Heart left ventricle (tissue), 16 donors: ENCODE measurements at regions of chr5 and their contacts with region 1.

Region 1: GRCh38 chr5:140710899-140711552 is 10.8 kb downstream of the ZMAT2 start:
- DNase-seq: peak; percentile 77 to 91 (median 85)
- ATAC-seq: peak; percentile 63 to 97 (median 96)
- H3K4me3 ChIP-seq: peak overlapping the region; percentile 28 to 72 (median 63)
- H3K27ac ChIP-seq: peak overlapping the region in 11 of 12 donors; percentile 67 to 95 (median 88)
- H3K4me1 ChIP-seq: peaks cover 0 to 12% (median 0%) of the 10 kb centered on the region in 12 donors
- H3K27me3 ChIP-seq: no peaks in the 10 kb centered on the region
- CTCF ChIP-seq: no peak
- POLR2A ChIP-seq: peak in 1 of 2 donors; percentile 44

Region 2: GRCh38 chr5:140362860-140363630 is 348.0 kb before region 1 on chr5:
- intact Hi-C with region 1: loop called in 2 of 10 experiments (anchors 10 kb)
- DNase-seq: peak; percentile 72 to 91 (median 76)
- ATAC-seq: peak; percentile 23 to 68 (median 64)
- H3K4me3 ChIP-seq: peak overlapping the region in 10 of 12 donors; percentile 16 to 50 (median 40)
- H3K27ac ChIP-seq: no peak overlapping the region
- H3K4me1 ChIP-seq: peaks cover 0 to 11% (median 3%) of the 10 kb centered on the region in 12 donors
- H3K27me3 ChIP-seq: no peaks in the 10 kb centered on the region
- CTCF ChIP-seq: peak; percentile 80 to 98 (median 94)
- POLR2A ChIP-seq: no peak

Region 3: DNA sequence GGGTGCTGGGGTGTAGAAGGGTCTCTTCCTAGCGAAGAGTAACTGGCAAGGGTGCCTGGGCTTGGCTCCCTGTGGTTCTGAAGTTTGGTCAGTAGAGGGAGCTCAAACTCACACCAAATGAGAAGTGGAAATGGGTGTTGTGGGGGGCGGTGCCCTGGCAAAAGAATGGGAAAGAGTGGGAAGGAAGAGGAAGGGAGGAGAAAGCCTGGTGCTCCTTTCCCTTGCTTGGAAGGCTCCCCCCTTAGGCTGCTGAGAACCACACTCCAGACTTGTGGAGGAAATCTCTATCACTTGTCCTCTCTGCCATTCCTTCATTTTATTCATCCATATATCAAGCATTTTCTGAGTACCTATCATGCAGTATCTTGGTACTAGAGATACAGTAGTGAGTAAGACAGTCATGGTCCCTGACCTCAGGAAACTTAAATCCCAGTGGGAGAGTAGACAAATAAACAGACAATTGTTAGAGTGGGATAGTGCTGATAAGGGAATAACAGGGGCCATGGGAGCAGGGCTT is 338.0 kb before region 1 on chr5:
- intact Hi-C with region 1: loop called in 3 of 10 experiments (anchors 5 to 10 kb)
- DNase-seq: peak; percentile 75 to 79 (median 78)
- ATAC-seq: peak; percentile 39 to 90 (median 86)
- H3K4me3 ChIP-seq: no peak overlapping the region
- H3K27ac ChIP-seq: peak overlapping the region in 1 of 12 donors; percentile 3
- H3K4me1 ChIP-seq: peaks cover 0 to 9% (median 8%) of the 10 kb centered on the region in 12 donors
- H3K27me3 ChIP-seq: no peaks in the 10 kb centered on the region
- CTCF ChIP-seq: peak; percentile 69 to 90 (median 79)
- POLR2A ChIP-seq: no peak

Region 4: DNA sequence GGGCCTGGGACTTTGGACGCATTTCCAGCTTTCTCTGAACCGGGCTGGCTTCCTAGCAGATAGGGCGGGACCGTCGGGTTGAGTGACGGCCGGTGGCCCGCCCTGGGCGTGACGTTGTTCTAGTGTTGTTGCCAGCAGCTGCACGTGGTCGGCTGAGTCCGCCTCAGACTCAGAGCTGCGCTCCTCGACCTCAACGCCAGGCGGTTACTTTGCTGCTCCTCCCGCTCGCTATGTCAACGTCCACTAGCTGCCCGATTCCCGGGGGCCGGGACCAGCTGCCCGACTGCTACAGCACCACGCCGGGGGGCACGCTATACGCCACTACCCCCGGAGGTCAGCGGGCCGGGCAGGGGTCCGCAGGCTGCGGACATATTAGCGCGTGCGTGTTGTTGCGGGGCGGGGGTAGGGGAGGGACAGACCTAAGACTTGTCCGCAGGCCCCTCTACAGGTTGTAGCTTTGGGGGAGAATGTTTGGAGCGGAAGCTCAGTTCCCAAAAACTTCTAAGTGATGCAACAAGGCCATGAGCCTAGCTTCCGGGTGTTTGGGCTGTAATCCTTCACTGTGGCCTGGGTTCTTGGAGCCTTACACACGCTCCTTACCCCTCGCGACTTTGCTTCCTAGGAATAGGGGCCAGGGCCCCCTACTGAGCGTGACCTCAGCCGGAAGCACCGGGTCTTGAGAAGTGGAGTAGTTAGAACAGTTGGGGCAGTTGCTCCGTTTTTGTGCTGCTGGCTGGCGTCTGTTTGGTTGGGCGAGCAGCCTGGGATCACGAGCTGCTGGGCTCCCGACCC is 163.3 kb before region 1 on chr5 and contains the start of gene EIF4EBP3:
- intact Hi-C with region 1: loop called in 1 of 10 experiments (anchors 5 kb)
- DNase-seq: peak; percentile 97 to 98 (median 98)
- ATAC-seq: peak; percentile 90 to 96 (median 94)
- H3K4me3 ChIP-seq: peak within 1 kb of the TSS; percentile 25 to 65 (median 54)
- H3K27ac ChIP-seq: peak within 1 kb of the TSS; percentile 83 to 98 (median 94)
- H3K4me1 ChIP-seq: peaks cover 14 to 50% (median 43%) of the 10 kb centered on the region in 12 donors
- H3K27me3 ChIP-seq: no peaks in the 10 kb centered on the region
- CTCF ChIP-seq: peak; percentile 35 to 81 (median 56)
- POLR2A ChIP-seq: peak in 1 of 2 donors; percentile 83
- total RNA-seq, gene EIF4EBP3: 4.7 to 34.9 (median 14.6) TPM

Region 5: DNA sequence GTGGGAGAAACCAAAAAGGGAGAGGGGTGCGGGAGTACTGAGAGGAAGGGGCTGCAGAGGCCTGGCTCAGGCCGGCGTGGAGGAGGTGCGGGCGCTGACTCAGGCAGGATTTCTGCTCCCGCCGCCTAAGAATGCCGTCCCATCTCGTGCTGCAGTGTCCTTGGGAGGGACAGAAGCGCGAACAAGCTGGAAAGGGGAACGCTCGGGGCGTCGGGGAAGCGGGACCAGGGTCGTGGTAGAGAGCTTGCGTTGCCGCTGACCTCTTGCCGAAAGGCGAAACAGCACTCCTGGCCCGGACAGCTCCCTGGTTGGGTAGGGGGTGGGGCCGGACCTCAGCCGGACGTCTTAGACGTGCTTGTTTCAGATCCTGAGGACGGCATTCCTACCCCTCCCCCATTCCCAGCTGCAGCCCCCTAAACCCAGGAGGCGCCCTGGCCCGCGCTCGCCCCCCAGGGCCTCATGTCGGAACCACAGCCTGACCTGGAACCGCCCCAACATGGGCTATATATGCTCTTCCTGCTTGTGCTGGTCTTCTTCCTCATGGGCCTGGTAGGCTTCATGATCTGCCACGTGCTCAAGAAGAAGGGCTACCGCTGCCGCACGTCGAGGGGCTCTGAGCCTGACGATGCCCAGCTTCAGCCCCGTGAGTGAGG is 926.9 kb after region 1 on chr5:
- intact Hi-C with region 1: no loop called
- DNase-seq: peak; percentile 58 to 82 (median 66)
- ATAC-seq: peak in 3 of 4 donors; percentile 23 to 53 (median 42)
- H3K4me3 ChIP-seq: peak overlapping the region; percentile 45 to 97 (median 78)
- H3K27ac ChIP-seq: peak overlapping the region in 1 of 12 donors; percentile 81
- H3K4me1 ChIP-seq: peaks cover 3 to 44% (median 24%) of the 10 kb centered on the region in 12 donors
- H3K27me3 ChIP-seq: no peaks in the 10 kb centered on the region
- CTCF ChIP-seq: peak in 7 of 12 donors; percentile 7 to 39 (median 33)
- POLR2A ChIP-seq: no peak